ENCODE measurements at regions of chr16 and their contacts with region 1.

Region 1: GRCh38 chr16:86563489-86564345 is 2.9 kb upstream of the FOXC2 start:
- DNase-seq: peak; percentile 81
- H3K4me3 Mint-ChIP-seq: peak overlapping the region; percentile 22
- H3K27ac Mint-ChIP-seq: peak overlapping the region; percentile 63
- H3K4me1 Mint-ChIP-seq: peaks cover 9% of the 10 kb centered on the region
- H3K27me3 Mint-ChIP-seq: peaks cover 45% of the 10 kb centered on the region

Region 2: GRCh38 chr16:86519649-86520316 is 43.9 kb before region 1 on chr16:
- intact Hi-C with region 1: loop called (anchors 2 kb)
- DNase-seq: peak; percentile 47
- H3K4me3 Mint-ChIP-seq: peak overlapping the region; percentile 58
- H3K27ac Mint-ChIP-seq: no peak overlapping the region
- H3K4me1 Mint-ChIP-seq: no peaks in the 10 kb centered on the region
- H3K27me3 Mint-ChIP-seq: peaks cover 30% of the 10 kb centered on the region

Region 3: DNA sequence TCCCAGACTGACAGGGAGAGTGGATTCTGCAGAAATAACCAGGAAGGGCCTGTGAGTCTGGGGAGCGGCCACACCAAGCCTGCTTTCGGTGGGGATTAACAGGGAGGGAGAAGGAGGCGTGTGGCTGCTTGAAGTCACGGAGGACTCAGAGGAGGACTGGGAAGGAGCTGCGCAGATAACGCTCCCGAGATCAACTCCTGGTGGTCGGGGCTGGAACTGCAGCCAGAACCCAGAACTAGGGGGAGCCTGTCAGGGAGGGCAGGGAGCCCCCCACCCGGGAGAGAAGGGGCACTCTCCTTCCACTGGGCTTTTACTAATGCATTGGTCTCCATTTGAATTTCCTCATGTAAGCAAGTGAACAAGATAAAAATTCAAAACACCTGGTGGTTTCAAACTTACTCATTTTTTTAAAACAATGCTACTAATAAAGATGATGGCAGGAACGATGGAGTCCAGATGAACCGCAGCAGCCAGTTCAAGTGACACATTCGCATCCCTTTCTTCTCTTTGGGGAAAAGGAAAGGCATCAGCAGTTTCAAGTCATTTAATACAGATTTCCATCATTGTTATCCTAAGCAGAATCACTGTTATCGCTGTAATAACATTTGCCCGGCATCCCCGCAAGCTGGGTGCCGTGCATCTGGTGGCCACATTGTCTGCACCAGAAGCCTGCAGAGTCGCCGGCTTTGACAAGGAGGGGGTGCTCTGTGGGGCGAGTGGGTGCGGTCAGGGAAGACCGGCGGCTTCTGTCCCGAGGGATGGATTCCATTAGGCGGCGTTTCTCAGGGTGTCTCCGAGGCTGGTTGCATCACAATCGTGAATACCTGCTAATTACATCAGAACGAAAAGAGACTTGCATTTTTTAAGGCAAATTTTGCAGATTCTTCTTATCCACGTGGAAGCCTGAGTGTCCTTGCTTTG is 197.7 kb after region 1 on chr16:
- intact Hi-C with region 1: loop called (anchors 1 kb)
- DNase-seq: peak; percentile 38
- H3K4me3 Mint-ChIP-seq: no peak overlapping the region
- H3K27ac Mint-ChIP-seq: no peak overlapping the region
- H3K4me1 Mint-ChIP-seq: peaks cover 6% of the 10 kb centered on the region
- H3K27me3 Mint-ChIP-seq: peaks cover 23% of the 10 kb centered on the region

Region 4: DNA sequence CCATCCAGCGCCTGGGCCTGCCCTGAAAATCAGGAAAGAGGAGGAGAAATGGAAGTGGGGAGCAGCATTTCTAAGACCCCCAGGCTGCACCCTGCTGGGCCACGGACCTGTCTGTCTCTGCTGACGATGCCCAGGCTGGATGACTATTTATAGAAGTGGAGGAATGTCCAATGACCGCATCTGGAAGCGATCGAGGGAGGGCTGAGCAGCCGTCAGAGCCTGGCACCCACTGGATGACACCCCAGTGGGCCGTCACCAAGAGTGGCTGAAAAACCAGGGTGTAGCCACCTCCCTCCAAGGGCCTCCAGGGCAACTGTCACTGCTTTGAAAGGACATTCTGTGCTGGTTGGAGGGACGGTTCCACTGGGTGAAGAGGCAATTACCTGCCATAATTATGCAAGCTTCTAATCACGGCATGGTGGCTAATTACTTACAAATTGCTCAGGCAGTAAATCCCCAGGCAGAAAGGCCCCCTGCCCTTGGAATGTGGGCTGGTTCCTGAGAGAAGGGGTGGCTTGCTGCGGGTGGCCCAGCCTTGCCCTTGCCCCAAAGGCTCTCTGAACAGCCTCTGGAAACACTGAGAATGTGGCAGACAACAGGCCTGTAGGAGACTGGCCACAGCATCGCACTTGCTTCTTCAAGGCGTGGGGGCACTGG is 421.4 kb after region 1 on chr16:
- intact Hi-C with region 1: no loop called
- DNase-seq: no peak
- H3K4me3 Mint-ChIP-seq: no peak overlapping the region
- H3K27ac Mint-ChIP-seq: no peak overlapping the region
- H3K4me1 Mint-ChIP-seq: peaks cover under 1% of the 10 kb centered on the region
- H3K27me3 Mint-ChIP-seq: no peaks in the 10 kb centered on the region

Region 5: DNA sequence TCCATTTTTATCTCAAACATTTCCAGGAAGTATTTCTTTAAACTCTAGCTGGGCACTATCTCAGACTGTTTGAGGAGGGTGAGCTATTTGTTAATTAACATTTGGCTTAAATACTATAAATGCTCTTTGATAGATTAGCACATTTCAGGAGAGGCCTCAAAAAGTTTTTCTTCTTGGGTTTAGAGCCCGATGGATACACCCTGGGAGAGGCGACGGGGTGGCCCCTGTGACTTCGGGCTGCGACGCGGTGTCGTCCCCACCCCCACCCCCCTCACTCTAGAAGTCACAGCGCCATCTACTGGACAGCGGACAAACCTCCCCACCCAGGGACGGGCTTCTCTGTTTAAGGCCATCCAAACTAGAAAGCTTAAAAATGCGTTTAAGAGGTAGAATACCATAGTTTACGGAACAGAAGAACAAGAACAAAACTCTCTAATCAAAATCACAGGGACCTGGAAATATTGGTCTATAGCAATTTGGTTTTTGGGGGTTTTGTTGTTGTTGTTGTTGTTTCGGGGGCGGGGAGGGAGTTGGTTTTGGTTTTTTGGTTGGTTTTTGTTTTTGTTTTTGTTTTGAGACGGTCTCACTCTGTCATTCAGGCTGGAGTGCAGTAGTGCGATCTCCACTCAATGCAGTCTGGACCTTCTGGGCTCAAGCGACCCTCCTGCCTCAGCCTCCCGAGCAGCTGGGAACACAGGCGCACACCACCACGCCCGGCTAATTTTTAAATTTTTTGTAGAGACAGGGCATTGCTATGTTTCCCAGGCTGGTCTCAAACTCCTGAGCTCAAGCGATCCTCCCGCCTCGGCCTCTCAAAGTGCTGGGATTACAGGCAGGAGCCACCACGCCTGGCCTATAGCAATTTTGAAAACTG is 499.1 kb after region 1 on chr16:
- intact Hi-C with region 1: loop called (anchors 1 kb)
- DNase-seq: peak; percentile 11
- H3K4me3 Mint-ChIP-seq: no peak overlapping the region
- H3K27ac Mint-ChIP-seq: no peak overlapping the region
- H3K4me1 Mint-ChIP-seq: no peaks in the 10 kb centered on the region
- H3K27me3 Mint-ChIP-seq: peaks cover 30% of the 10 kb centered on the region

Region 6: DNA sequence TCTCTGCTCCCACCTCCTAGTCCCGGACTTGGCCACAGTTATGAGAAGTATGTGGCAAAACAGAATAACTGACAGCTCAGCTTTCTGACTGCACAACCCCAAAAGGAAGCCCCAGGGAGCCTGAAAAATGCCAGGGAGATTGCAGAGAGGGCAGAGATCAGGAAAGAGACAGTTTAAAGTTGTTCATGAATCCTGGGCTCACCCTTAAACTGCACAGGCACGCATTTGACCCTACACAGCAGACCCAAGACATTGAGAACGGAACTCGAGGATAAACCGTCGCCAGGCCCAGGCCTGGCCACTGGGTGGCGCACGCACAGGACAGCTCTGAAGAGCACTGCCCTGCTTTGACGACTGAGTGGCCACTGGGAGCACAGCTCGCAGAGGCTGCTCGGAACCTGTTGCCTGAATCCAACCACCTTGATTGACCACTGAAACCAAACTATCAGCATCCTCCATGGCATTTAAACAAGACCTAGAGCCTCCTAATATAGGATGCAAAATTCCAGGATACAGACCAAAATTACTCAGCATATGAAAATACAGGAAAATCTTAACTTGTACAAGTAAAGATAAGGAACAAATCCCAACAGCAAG is 639.4 kb after region 1 on chr16:
- intact Hi-C with region 1: loop called (anchors 1 kb)
- DNase-seq: peak; percentile 36
- H3K4me3 Mint-ChIP-seq: no peak overlapping the region
- H3K27ac Mint-ChIP-seq: no peak overlapping the region
- H3K4me1 Mint-ChIP-seq: peaks cover 6% of the 10 kb centered on the region
- H3K27me3 Mint-ChIP-seq: peaks cover 9% of the 10 kb centered on the region

Region 7: GRCh38 chr16:87393680-87394055 is 830.0 kb after region 1 on chr16:
- intact Hi-C with region 1: loop called (anchors 1 kb)
- DNase-seq: no peak
- H3K4me3 Mint-ChIP-seq: peak overlapping the region; percentile 92
- H3K27ac Mint-ChIP-seq: peak overlapping the region; percentile 87
- H3K4me1 Mint-ChIP-seq: peaks cover 34% of the 10 kb centered on the region
- H3K27me3 Mint-ChIP-seq: no peaks in the 10 kb centered on the region